ENCODE measurements at regions of chr3 and their contacts with region 1.

Region 1: GRCh38 chr3:127473244-127474024 is 117.1 kb downstream of the TPRA1 start:
- DNase-seq: peak; percentile 84 to 91
- H3K4me3 ChIP-seq: no peak overlapping the region
- H3K27ac ChIP-seq: no peak overlapping the region
- H3K4me1 ChIP-seq: peaks cover 0 to 4% (median 3%) of the 10 kb centered on the region in 4 experiments; a peak in 3 of 7 replicates
- H3K27me3 ChIP-seq: no peaks in the 10 kb centered on the region
- CTCF ChIP-seq: peak in 2 of 3 experiments; percentile 75 to 83; a peak in 3 of 4 replicates
- EP300 ChIP-seq: no peak
- POLR2A ChIP-seq: no peak
- RAD21 ChIP-seq: peak; percentile 84 to 90

Region 2: GRCh38 chr3:127288921-127289705 is 184.3 kb before region 1 on chr3:
- CTCF ChIA-PET with region 1: interaction called, 10 read pairs
- POLR2A ChIA-PET with region 1: no interaction called
- DNase-seq: no peak
- H3K4me3 ChIP-seq: no peak overlapping the region
- H3K27ac ChIP-seq: no peak overlapping the region
- H3K4me1 ChIP-seq: no peaks in the 10 kb centered on the region
- H3K27me3 ChIP-seq: no peaks in the 10 kb centered on the region
- CTCF ChIP-seq: peak in 2 of 3 experiments; percentile 60 to 64; a peak in 3 of 4 replicates
- EP300 ChIP-seq: no peak
- POLR2A ChIP-seq: no peak
- RAD21 ChIP-seq: peak; percentile 48

Region 3: GRCh38 chr3:127455541-127456450 is 17.6 kb before region 1 on chr3:
- CTCF ChIA-PET with region 1: interaction called, 74 read pairs
- POLR2A ChIA-PET with region 1: interaction called, 3 read pairs
- DNase-seq: peak; percentile 77 to 97
- H3K4me3 ChIP-seq: peak overlapping the region; percentile 29 to 67 (median 49)
- H3K27ac ChIP-seq: no peak overlapping the region
- H3K4me1 ChIP-seq: peaks cover 2 to 15% (median 8%) of the 10 kb centered on the region in 4 experiments; a peak in 5 of 7 replicates
- H3K27me3 ChIP-seq: peaks cover 19 to 41% (median 34%) of the 10 kb centered on the region in 4 experiments
- CTCF ChIP-seq: peak in 2 of 3 experiments; percentile 80 to 98; a peak in 3 of 4 replicates
- EP300 ChIP-seq: peak in 1 of 2 experiments; percentile 65; a peak in 1 of 3 replicates
- POLR2A ChIP-seq: no peak
- RAD21 ChIP-seq: peak; percentile 93 to 94

Region 4: DNA sequence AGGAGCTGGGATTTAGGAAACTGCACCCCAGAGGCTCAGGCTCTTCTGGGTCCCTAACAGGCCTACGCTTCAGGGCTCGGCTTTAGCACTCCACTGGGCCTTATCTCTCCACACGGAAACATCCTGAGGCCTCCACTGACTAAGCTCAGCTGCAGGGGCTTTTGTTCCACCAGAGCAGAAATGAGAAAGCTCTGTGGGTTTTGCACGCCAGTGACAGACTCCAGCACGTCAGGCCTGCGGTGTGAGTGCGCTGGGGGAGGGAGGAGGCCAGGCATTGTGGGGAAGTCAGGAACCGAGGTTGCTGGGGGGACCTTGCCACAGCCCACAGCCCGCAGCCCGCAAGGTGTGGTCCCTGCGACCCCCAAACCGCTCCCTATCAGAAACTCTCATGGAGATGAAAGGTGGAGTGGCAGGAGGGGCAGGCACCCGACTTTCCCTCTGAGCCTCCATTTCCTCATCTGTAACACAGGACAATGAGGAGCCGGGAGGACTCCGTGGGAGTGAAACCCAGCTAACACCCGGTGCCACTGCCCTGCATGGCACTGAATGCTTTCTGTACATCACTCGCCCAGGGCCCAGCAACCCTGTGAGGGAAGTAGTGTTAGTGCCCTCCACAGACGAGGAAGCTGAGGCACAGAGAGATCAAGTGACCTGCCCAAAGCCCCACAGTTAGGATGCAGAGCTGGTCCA is 10.6 kb after region 1 on chr3:
- CTCF ChIA-PET with region 1: interaction called, 33 read pairs
- POLR2A ChIA-PET with region 1: no interaction called
- DNase-seq: peak in 1 of 2 experiments; percentile 39
- H3K4me3 ChIP-seq: no peak overlapping the region
- H3K27ac ChIP-seq: no peak overlapping the region
- H3K4me1 ChIP-seq: peaks cover 0 to 6% (median 3%) of the 10 kb centered on the region in 4 experiments; a peak in 4 of 7 replicates
- H3K27me3 ChIP-seq: no peaks in the 10 kb centered on the region
- CTCF ChIP-seq: no peak
- EP300 ChIP-seq: no peak
- POLR2A ChIP-seq: no peak
- RAD21 ChIP-seq: no peak

Region 5: DNA sequence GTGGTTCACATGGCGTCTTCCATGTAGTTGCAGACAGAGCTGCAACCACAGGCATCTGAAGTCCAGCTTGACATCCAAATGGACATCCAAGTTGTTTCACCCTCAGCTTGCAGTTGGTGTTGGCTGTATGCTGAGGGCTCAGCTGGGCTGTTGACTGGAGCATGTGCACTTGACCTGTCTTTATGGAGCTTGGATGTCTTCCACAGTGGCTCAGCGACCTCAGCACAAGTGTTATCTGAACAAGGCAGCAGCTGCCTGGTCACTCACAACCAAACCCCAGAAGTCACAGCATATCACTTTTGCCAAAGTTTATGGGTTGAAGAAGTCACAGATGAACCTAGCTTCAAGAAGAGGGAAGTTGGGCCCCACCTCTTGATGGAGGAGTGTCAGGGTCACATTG is 24.2 kb after region 1 on chr3:
- CTCF ChIA-PET with region 1: no interaction called
- POLR2A ChIA-PET with region 1: no interaction called
- DNase-seq: no peak
- H3K4me3 ChIP-seq: no peak overlapping the region
- H3K27ac ChIP-seq: no peak overlapping the region
- H3K4me1 ChIP-seq: no peaks in the 10 kb centered on the region; a peak in 1 of 7 replicates
- H3K27me3 ChIP-seq: no peaks in the 10 kb centered on the region
- CTCF ChIP-seq: no peak
- EP300 ChIP-seq: no peak
- POLR2A ChIP-seq: no peak
- RAD21 ChIP-seq: no peak

Region 6: DNA sequence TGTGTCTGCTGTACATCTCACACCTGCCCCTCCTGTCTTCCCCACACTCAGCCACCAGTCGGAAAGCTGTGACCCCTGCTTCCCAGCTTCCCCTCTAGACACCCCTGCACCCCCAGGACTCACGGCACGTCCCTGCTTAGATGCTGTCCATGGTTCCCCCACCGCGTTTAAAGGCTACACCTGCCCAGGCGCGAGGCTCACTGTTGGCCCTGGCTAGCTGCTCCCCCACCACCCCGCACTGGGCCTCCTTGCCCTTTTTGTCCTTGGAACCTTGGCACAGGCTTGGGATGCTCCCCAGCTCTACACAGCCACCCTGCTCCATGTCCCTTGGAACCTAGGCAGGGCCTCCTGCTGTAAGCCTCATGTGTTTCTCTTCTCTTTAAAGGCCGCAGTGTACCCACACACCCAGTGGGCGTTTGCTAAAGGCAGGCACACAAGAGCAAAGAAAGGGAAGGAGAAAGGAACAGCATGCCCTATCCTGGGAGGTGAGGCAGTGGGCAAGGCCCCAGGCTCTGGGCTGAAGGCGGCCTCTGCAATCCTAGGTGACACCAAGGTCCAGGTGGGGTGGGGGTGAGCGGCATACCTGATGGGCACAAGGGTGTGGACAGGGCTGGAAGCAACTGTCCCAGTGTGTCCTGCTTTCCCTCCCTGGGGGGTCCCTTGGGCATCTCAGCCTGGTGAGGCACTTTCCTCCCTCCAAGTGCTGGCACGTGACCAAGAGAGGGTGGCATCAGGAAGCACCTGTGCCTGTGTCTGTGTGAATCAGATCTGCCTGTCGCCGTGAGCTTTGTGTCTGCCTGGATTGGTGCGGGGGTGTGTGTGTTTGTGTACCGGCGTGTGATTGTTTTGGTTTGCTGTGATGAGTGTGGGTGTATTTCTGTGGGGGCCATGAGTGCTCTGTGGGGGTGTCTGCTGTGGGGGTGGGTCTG is 62.7 kb after region 1 on chr3:
- CTCF ChIA-PET with region 1: interaction called, 69 read pairs
- POLR2A ChIA-PET with region 1: no interaction called
- DNase-seq: no peak
- H3K4me3 ChIP-seq: no peak overlapping the region
- H3K27ac ChIP-seq: no peak overlapping the region
- H3K4me1 ChIP-seq: peaks cover 0 to 18% (median 10%) of the 10 kb centered on the region in 4 experiments; a peak in 6 of 7 replicates
- H3K27me3 ChIP-seq: no peaks in the 10 kb centered on the region
- CTCF ChIP-seq: no peak
- EP300 ChIP-seq: no peak
- POLR2A ChIP-seq: no peak
- RAD21 ChIP-seq: no peak

Region 7: GRCh38 chr3:127544192-127544802 is 70.9 kb after region 1 on chr3:
- CTCF ChIA-PET with region 1: interaction called, 69 read pairs
- POLR2A ChIA-PET with region 1: no interaction called
- DNase-seq: peak in 1 of 2 experiments; percentile 91
- H3K4me3 ChIP-seq: no peak overlapping the region
- H3K27ac ChIP-seq: no peak overlapping the region
- H3K4me1 ChIP-seq: peaks cover 0 to 9% (median 6%) of the 10 kb centered on the region in 4 experiments; a peak in 6 of 7 replicates
- H3K27me3 ChIP-seq: peaks cover 0 to 3% (median 0%) of the 10 kb centered on the region in 4 experiments; a peak in 2 of 7 replicates
- CTCF ChIP-seq: peak in 2 of 3 experiments; percentile 82 to 86; a peak in 3 of 4 replicates
- EP300 ChIP-seq: no peak
- POLR2A ChIP-seq: no peak
- RAD21 ChIP-seq: peak; percentile 79 to 89

Region 8: GRCh38 chr3:127786353-127787070 is 313.1 kb after region 1 on chr3:
- CTCF ChIA-PET with region 1: no interaction called
- POLR2A ChIA-PET with region 1: no interaction called
- DNase-seq: no peak
- H3K4me3 ChIP-seq: no peak overlapping the region
- H3K27ac ChIP-seq: no peak overlapping the region
- H3K4me1 ChIP-seq: no peaks in the 10 kb centered on the region; a peak in 1 of 7 replicates
- H3K27me3 ChIP-seq: no peaks in the 10 kb centered on the region
- CTCF ChIP-seq: no peak
- EP300 ChIP-seq: no peak
- POLR2A ChIP-seq: no peak
- RAD21 ChIP-seq: no peak